PC-3 (cell line): ENCODE measurements at regions of chr2 and their contacts with region 1.

Region 1: DNA sequence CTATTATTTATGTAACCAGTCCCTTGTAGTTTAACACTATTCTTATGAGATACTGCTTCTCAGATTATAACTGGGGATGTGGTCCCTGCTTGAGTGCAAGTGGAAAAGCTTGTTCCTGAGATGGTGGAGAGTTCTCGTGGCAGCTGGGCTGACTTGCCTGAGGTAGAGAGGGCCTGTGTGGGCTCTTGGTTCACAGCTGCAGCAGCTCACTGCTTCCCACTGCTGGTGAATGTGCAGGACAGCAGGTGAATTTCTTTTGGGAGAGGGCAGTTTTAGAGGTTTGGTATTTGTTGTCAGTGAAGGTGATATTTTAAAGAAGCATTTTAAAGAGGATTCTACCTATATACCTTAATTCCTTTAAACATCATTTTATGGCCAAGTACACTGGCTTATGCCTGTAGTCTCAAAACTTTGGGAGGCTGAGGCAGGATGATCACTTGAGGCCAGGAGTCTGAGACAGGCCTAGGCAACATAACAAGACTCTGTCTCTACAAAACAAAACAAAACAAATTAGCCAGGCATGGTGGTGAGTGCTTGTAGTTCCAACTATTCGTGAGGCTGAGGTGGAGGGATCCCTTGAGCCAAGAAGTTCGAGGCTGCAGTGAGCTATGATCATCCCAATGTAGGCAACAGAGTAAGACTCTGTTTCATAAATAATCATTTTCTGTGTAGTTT is 94.8 kb downstream of the MTA3 start:
- DNase-seq: peak; percentile 81
- ATAC-seq: peak; percentile 93
- H3K4me3 ChIP-seq: no peak overlapping the region
- H3K27ac ChIP-seq: no peak overlapping the region
- H3K4me1 ChIP-seq: no peaks in the 10 kb centered on the region
- H3K27me3 ChIP-seq: no peaks in the 10 kb centered on the region
- CTCF ChIP-seq: peak; percentile 97

Region 2: DNA sequence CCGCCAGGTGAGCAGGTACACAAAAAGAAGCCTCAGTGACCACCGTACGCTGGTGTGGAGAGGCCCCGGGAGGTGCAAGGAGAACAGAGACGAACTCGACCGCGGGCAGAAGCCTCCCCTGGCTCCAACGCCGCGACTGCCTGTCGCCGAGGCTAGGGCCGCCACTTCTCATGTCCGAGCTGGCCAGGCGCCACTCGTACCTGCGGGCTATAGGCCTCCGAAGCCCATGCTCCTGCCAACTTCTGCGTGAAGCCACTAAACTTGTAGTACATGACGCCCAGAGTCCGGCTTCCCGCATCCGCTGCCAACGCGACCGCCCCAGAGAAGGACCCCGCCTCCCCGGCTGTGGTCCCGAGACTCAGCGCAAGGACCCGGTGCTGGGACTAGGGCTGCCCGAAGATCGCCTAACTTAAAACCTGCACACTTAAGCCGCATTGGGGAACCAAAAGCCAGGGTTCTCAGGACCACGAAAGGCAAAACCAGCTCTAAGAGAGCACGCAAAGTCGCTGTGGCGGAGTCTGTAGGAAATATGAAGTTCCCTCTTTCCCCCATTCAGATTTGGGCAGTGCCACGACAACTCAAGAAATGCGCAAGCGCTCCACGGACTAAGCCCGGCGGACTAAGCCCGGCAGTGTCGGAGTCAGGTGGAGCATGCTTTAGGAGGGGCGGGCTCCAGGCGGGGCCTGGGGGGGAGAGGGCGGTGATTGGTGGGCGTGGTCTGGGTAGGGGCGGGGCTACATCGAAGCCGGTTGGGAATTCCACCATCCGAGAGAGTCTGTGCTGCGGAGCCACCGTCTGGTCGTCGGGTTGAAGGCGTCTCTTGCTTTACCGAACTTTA is 302.1 kb before region 1 on chr2 and contains the start of gene COX7A2L:
- CTCF ChIA-PET with region 1: no interaction called
- POLR2A ChIA-PET with region 1: no interaction called
- intact Hi-C with region 1: loop called (anchors 10 kb)
- DNase-seq: peak; percentile 96
- ATAC-seq: peak; percentile 91
- H3K4me3 ChIP-seq: peak within 1 kb of the TSS; percentile 98
- H3K27ac ChIP-seq: peak within 1 kb of the TSS; percentile 90
- H3K4me1 ChIP-seq: peaks cover 21% of the 10 kb centered on the region; the same call in 1 of the 2 replicates
- H3K27me3 ChIP-seq: no peaks in the 10 kb centered on the region
- CTCF ChIP-seq: 0 out of 2 replicates have a peak, but pooled peaks have one; percentile 28
- total RNA-seq, gene COX7A2L: 106 and 120 TPM in 2 replicates

Region 3: GRCh38 chr2:42494355-42495233 is 168.6 kb before region 1 on chr2:
- CTCF ChIA-PET with region 1: interaction called, 5 read pairs
- POLR2A ChIA-PET with region 1: no interaction called
- intact Hi-C with region 1: loop called (anchors 1 kb)
- DNase-seq: peak; percentile 95
- ATAC-seq: peak; percentile 76
- H3K4me3 ChIP-seq: peak overlapping the region; percentile 75
- H3K27ac ChIP-seq: peak overlapping the region; percentile 71
- H3K4me1 ChIP-seq: peaks cover 15% of the 10 kb centered on the region
- H3K27me3 ChIP-seq: no peaks in the 10 kb centered on the region
- CTCF ChIP-seq: peak; percentile 90

Region 4: GRCh38 chr2:42513257-42513918 is 149.9 kb before region 1 on chr2:
- CTCF ChIA-PET with region 1: interaction called, 14 read pairs
- POLR2A ChIA-PET with region 1: no interaction called
- intact Hi-C with region 1: loop called (anchors 1 kb)
- DNase-seq: peak; percentile 78
- ATAC-seq: peak; percentile 43
- H3K4me3 ChIP-seq: no peak overlapping the region
- H3K27ac ChIP-seq: no peak overlapping the region
- H3K4me1 ChIP-seq: no peaks in the 10 kb centered on the region
- H3K27me3 ChIP-seq: no peaks in the 10 kb centered on the region
- CTCF ChIP-seq: peak; percentile 80

Region 5: DNA sequence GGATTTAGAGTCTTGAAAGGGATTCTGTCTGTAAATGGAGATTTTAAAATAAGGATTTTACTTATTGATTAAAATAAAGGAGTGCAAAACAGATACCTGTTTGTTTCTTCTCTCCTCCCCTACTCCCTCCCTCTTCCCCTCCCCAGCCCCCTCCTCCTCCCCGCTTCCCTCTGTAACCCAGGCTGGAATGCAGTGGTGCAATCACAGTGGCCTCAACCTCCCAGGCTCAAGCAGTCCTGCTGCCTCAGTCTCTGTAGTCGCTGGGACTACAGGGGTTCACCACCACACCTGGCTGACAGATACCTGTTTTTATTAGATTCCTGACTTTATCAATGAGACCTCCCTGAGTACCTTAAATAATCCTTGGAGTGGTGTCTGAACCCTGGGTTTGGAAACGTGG is 43.6 kb after region 1 on chr2:
- CTCF ChIA-PET with region 1: interaction called, 16 read pairs
- POLR2A ChIA-PET with region 1: no interaction called
- intact Hi-C with region 1: no loop called
- DNase-seq: no peak
- ATAC-seq: no peak
- H3K4me3 ChIP-seq: no peak overlapping the region
- H3K27ac ChIP-seq: no peak overlapping the region
- H3K4me1 ChIP-seq: no peaks in the 10 kb centered on the region
- H3K27me3 ChIP-seq: no peaks in the 10 kb centered on the region
- CTCF ChIP-seq: no peak